ENCODE measurements at regions of chr3 and their contacts with region 1.

Region 1: GRCh38 chr3:156509189-156510174 is 45.4 kb downstream of the SSR3 start:
- DNase-seq: peak; percentile 69
- CTCF ChIP-seq: peak; percentile 51

Region 2: GRCh38 chr3:156341831-156342416 is 167.6 kb before region 1 on chr3:
- CTCF ChIA-PET with region 1: no interaction called
- POLR2A ChIA-PET with region 1: no interaction called
- DNase-seq: peak; percentile 58
- CTCF ChIP-seq: peak; percentile 31

Region 3: DNA sequence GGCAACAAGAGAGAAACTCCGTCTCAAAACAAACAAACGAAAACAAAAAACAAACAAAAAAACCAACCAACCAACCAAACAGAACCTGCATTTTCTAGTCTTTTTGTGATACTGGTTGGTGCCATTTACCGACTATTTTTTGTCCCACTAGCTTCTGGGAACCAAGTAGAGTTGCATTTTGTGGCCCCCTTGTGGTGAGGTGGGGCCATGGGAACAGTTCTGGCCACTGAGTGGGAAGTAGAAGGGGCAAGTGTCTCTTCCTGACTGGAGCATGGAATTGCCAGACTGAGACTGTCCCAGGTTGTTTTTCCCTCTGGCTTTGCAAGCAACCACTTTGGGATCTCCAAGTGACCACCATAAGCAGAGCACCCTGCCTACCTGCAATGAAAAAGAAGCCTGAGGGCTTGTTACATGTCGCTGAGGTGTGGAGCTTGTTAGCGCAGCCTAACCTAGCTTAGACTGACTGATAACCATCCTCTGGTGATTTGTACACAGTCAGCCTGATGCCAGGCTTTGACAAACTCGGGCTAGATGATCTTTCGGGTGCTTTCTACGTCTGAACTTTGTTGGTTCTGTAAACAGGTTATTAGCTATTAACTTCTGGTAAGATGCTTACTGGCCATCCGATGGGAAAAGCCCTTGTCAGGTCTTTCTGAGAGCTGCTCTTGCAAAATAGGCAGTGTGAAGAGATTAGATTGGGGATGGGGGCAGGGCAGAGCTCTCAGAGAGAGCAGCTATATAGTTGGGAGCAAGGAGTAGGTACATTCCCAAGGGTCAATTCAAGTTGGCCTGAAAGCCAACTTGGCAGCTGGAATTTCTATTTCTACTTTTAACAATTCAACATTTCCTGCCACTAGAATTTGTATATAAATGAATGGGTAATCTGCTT is 126.8 kb before region 1 on chr3:
- CTCF ChIA-PET with region 1: interaction called, 10 read pairs
- POLR2A ChIA-PET with region 1: no interaction called
- DNase-seq: peak; percentile 45
- CTCF ChIP-seq: peak; percentile 50

Region 4: GRCh38 chr3:156469456-156469855 is 40.0 kb before region 1 on chr3:
- CTCF ChIA-PET with region 1: interaction called, 12 read pairs
- POLR2A ChIA-PET with region 1: no interaction called
- DNase-seq: no peak
- CTCF ChIP-seq: no peak

Region 5: DNA sequence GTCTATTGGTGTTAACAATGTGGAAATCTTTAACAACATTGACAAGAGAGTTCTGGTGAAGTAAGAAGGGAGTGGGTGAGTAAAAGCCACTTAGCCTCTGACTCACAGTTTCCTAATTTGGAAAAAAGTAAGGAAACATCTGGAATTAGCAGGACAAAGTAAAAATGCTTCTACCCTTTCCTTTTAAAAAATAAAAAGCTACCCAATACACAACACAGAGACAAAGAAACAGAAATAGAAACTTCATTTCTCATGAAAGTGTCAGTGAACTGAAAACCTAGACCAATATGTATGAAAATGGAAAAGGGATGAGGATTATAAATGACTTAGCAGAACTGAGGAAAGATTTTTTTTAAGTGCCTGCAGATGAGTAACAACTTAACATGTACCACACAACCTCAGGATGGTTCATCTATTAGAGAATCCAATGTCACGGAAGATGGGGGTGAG is 20.0 kb before region 1 on chr3:
- CTCF ChIA-PET with region 1: interaction called, 60 read pairs
- POLR2A ChIA-PET with region 1: no interaction called
- DNase-seq: no peak
- CTCF ChIP-seq: no peak

Region 6: DNA sequence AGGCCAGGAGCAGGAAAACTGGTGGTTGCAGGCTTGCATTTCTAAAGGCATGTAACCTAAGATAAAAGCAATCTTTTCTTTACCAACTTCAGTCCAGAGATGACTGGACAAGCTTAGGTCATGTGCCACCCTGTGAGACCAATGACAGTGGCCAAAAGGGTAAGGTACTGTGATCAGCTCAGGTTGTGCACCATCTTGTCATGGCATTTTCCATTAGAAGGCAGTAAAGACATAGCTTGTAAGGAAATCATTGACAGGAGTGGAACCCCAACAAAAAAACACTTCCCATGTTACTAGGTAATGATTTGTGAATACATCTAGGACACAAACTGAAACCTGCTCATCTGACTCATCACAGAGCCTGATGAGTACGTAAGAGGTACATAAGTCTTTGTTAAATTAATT is 10.3 kb after region 1 on chr3:
- CTCF ChIA-PET with region 1: interaction called, 82 read pairs
- POLR2A ChIA-PET with region 1: no interaction called
- DNase-seq: no peak
- CTCF ChIP-seq: no peak

Region 7: DNA sequence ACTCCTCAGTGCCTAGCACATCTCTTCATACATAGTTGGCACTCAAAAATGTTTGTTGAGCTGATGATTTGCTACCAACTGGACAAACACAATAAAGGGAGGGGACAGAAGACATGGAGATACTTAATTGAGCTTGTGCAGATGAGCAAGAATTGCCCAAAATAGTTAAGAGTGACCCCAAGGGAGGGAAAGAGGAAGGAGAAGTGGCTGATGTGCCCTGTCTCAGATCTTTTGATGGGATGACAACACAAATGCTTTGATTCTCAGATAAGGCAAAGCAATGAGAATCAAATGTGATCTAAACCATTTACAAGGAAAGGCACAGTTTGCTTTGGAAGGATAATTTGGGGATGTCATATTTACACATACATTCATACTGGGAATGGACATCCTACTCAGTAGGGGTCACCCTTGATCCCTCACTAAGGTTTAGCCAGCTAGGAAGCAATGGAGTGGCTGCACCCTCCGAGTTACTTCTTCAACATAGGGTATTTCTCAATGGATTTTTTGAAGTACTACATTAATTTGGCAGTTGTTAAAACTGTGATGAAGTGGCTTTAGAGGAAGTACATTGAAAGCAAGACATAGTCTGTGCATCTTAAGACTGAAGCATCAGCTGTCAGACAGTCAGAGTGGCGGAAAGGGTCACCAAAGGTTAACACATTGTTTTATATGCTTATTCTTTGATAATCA is 67.3 kb after region 1 on chr3:
- CTCF ChIA-PET with region 1: no interaction called
- POLR2A ChIA-PET with region 1: no interaction called
- DNase-seq: no peak
- CTCF ChIP-seq: no peak